ENCODE measurements at regions of chr4 and their contacts with region 1.

Region 1: DNA sequence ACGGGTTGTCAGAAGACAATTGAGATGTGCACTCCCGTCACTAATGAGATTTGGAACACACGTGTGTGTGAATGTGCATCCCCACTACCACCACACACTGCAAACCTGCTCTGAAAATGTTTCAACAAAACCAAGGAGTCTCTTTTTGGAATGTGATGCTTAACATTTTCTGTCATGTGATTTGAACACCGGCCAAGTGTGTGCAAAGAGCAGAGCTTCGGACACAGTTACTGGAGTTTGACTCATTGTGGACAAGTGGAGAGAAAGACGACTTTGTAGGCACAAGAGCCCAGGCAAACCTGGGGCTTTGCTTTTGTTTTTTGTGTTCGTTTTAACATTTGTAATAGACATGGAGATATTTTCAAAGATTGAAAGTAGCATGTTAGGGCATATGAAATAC is 49.2 kb downstream of the CCKAR start:
- DNase-seq: no peak
- CTCF ChIP-seq: no peak

Region 2: GRCh38 chr4:26273616-26273980 is 167.5 kb before region 1 on chr4:
- CTCF ChIA-PET with region 1: no interaction called
- POLR2A ChIA-PET with region 1: no interaction called
- DNase-seq: no peak
- CTCF ChIP-seq: no peak

Region 3: DNA sequence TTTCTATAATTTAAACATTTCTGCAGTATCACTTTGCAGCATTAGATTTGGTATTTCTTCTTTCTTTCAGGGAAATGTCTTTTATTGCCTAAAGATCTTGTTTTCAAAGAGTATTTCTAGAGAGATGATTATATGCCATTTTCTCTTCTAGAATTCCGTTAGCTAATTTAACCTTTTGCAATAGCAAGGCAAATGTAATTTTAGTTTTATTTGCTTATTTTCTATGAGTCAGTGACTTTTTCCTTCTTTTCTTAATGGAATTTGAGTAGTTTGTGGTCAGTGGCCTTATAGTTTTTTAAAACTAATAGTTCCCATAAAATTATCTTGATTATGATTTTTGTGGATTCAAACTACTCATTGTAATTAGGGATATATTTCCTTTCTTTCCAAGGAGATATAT is 23.0 kb before region 1 on chr4:
- CTCF ChIA-PET with region 1: interaction called, 11 read pairs
- POLR2A ChIA-PET with region 1: no interaction called
- DNase-seq: no peak
- CTCF ChIP-seq: no peak

Measured in GM10248 (cell line).